ENCODE measurements at regions of chr21 and their contacts with region 1.

Region 1: DNA sequence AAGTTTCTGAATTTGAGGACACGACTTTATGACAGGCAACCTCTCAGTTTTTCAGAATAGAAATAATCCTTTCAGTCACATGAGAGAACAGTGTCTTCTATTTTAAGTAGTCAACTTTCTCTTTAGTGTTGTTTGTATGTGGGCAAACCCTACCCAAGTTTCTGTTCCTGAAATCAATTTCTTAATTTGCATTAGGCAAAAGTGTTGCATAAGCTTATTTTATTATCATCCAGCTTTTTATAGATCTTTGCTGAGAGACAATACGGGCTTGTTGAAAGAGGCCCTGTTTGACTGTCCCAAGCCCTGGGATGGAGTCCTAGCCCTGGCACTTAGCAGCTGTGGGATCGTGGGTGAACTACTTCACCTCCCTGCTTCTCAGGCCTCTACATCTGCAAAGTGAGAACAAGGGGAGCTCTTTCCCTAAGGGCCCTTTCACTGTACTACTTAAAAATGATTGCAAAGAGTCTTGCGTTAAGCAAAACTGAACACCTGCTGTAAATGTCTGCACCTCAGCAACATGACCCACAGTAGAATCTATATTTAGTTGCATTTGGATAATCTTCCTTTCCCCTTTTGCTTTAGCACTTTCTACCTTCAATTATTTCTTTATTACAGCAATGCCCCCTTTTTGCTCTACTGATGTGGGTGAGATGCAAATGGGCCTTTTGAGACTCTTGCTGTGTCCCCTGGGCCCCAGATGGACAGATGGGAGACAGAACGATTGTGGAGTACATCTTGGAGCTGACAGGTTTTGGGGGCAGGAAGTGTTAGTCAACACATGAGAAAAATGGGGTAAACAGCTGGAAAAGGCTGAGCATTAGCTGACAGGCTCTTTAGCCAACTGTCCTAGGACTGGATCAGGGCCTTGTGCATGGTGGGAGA is 41.0 kb upstream of the SCAF4 start:
- DNase-seq: no peak
- H3K4me3 ChIP-seq: no peak overlapping the region
- H3K27me3 ChIP-seq: no peaks in the 10 kb centered on the region
- CTCF ChIP-seq: no peak

Region 2: DNA sequence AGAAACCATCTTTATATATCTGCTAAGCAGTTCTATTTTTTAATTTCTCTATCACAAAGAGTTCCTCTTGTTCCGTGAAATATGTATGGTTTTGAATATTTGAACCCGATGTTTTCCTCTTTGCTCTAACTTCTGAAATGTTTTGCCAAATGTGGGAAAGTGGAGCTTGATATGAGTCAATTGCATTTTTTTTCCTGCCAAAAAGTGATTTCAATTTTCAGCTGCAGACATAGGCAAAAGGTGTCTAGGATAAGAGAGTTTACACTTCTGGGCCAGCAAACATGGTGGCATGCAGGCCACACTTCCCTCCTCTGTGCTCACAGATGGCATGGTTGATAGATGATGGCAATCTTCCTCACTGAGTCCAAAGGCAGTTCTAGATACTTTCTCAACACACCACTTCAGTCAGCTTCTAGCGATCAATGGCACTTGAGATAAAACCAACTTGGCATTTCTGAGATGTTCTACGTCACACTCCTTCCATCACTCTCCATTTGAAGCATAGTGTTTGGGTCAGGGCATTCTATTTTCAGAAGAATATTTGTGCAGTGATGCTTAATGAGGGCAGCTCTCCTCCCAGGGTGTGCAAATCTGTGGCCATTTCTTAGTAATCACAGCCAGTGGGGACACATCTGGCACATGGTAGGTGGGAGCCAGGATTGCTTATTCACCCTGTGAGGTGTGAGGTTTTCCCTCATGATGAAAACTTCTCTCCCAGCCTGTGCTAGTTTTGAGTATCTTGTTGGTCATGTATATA is 13.4 kb after region 1 on chr21:
- CTCF ChIA-PET with region 1: interaction called, 11 read pairs
- POLR2A ChIA-PET with region 1: no interaction called
- DNase-seq: no peak
- H3K4me3 ChIP-seq: no peak overlapping the region
- H3K27me3 ChIP-seq: no peaks in the 10 kb centered on the region; the same call in 1 of the 2 replicates
- CTCF ChIP-seq: no peak

Region 3: DNA sequence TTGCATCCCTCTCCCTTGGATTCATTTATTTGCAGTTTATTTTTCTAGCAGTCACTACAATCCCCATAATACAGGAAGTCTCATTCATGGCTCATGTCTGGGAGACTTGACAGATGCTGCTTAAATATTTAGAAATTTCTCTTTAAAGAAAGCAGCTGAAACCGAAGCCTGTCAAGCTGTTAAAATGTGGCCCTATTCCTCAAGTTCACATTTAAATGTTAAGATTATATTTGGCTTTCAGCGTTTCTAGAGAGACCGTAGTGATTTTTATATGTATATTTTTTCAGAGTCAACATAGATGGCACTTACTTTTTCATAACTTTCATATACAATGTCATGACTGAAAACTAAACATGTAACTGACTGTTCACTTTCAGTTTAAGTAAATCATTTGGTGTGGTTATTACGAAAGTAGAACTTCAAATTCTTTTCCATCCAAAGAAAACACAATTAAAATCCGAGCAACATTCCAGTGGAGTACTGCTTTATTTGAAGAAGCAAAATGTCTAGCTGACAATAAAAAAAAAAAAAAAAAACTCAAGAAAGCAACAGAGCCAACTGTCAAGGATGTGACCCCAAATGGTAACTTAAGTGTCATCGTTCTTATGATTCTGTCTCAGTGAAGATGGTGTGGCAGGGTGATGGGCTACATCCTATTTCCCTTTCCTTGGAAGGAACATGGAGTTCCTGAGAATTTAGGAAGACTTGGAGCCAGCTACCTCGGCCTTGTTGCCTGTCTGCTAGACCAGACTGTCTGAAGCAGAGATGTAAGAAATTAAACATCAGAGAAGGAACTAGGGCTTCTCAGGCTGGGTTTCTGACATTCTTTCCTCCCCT is 468.2 kb after region 1 on chr21:
- CTCF ChIA-PET with region 1: no interaction called
- POLR2A ChIA-PET with region 1: no interaction called
- DNase-seq: no peak
- H3K4me3 ChIP-seq: no peak overlapping the region
- H3K27me3 ChIP-seq: peaks cover 5% of the 10 kb centered on the region
- CTCF ChIP-seq: no peak